Left colon (tissue), 2 donors: ENCODE measurements at regions of chr1 and their contacts with region 1.

Region 1: GRCh38 chr1:153532769-153533599 is 2.8 kb downstream of the S100A6 start:
- DNase-seq: peak; percentile 90 to 92
- ATAC-seq: peak; percentile 63

Region 2: GRCh38 chr1:153422450-153423068 is 110.4 kb before region 1 on chr1:
- intact Hi-C with region 1: no loop called
- DNase-seq: peak; percentile 33 to 81
- ATAC-seq: peak; percentile 66

Region 3: GRCh38 chr1:153568367-153569099 is 35.5 kb after region 1 on chr1:
- intact Hi-C with region 1: loop called in 1 of 2 experiments (anchors 5 kb)
- DNase-seq: peak; percentile 85 to 93
- ATAC-seq: peak; percentile 27

Region 4: DNA sequence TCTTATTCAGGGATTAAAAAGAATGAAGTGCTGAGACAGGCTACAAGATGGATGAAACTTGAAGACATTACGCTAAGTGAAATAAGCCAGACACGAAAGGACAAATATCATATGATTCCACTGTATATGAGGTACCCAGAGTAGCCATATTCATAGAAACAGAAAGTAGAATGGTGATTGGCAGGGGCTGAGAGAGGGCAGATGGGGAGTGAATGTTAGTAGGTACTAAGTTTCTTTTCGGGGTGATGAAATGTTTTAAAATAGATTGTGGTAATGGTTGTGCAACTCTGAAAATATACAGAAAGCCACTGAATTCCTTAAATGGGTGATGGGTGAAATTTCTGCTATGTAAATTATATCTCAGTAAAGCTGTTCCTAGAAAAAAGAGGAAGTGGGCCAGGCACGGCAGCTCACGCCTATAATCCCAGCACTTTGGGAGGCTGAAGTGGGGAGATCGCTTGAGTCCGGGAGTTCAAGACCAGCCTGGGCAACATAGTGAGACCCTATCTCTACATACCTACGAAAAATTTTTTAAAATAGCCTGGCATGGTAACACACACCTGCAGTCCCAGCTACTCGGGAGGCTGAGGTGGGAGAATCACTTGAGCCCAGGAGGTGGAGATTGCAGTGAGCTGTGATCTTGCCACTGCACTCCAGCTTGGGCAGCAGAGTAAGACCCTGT is 258.1 kb after region 1 on chr1:
- intact Hi-C with region 1: no loop called
- DNase-seq: peak in 1 of 2 donors; percentile 47
- ATAC-seq: peak; percentile 33